ENCODE measurements at regions of chr19 and their contacts with region 1.

Region 1: DNA sequence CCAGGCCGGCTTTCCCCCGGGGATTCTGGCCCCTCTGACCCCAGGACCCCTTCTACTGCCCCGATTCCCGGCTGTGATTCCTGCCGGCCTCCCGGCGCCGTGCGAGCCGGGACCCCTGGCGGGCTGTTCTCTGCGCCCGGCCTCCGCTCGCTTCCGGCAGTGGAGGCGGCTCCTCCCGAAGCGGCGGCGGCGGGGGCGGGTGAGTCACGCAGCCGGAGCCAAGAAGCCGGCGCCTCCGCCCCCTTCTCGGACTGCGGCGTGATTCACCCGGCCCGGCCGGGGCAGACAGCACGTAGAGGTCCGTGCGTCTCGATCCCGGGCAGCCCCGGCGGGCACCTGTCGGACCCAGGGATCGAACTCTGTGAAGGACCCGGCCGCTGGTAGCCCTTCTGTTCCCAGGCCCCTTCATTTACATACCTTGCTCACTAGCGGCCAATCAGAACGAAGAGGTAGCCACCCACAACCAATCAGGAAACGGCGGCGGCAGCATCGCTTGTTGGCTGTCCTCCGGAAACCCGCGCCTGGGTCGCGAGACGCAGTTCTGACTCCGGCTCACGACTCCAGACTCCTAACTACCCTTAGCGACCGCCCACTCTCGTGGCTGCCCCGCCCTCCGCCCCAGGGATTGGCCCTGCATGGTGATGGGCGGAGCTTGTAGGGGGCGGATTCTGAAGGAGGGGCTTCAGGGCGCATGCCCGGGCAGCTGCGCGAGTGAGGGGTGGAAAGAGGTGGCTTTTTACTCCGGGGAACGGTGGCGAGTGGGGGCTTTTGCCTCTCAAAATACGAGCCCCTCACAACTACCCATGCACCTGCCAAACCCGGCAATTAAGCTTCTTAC is at the start of gene SERTAD1:
- DNase-seq: peak; percentile 100
- ATAC-seq: peak; percentile 78 to 85
- H3K4me3 ChIP-seq: peak within 1 kb of the TSS; percentile 66
- H3K27ac ChIP-seq: peak within 1 kb of the TSS; percentile 93 to 94
- H3K4me1 ChIP-seq: peaks cover 25% of the 10 kb centered on the region
- CTCF ChIP-seq: peak; percentile 100
- EP300 ChIP-seq: no peak; a peak in 1 of 5 replicates
- POLR2A ChIP-seq: peak; percentile 99
- RAD21 ChIP-seq: peak; percentile 11 to 73; a peak in 4 of 5 replicates
- polyA plus RNA-seq, gene SERTAD1: 10.0 and 10.7 TPM in 2 replicates

Region 2: GRCh38 chr19:40025938-40026596 is 399.6 kb before region 1 on chr19:
- CTCF ChIA-PET with region 1: no interaction called
- POLR2A ChIA-PET with region 1: no interaction called
- DNase-seq: no peak
- ATAC-seq: no peak
- H3K4me3 ChIP-seq: no peak overlapping the region
- H3K27ac ChIP-seq: no peak overlapping the region
- H3K4me1 ChIP-seq: no peaks in the 10 kb centered on the region
- CTCF ChIP-seq: no peak
- EP300 ChIP-seq: no peak
- POLR2A ChIP-seq: no peak
- RAD21 ChIP-seq: no peak

Region 3: DNA sequence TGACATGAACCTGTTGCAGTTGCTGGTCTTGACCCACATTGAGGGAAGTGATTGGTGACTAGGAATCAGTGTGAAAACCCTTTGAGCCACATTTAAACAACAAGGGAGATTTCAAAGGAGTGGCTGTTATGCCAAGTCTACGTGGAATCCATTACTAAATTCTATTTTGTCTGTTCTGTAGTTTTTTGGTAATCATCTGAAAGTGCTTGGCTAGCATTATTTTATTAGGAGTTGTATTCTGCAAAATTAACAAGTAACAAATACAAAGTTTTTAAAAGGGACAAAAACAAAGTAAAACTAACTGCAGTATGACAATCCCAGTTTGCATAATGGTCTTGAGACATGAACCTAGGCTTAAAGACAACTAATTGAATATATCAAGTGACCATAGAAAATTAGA is 320.9 kb before region 1 on chr19:
- CTCF ChIA-PET with region 1: no interaction called
- POLR2A ChIA-PET with region 1: no interaction called
- DNase-seq: no peak
- ATAC-seq: no peak
- H3K4me3 ChIP-seq: no peak overlapping the region
- H3K27ac ChIP-seq: no peak overlapping the region
- H3K4me1 ChIP-seq: no peaks in the 10 kb centered on the region
- CTCF ChIP-seq: no peak
- EP300 ChIP-seq: no peak
- POLR2A ChIP-seq: no peak
- RAD21 ChIP-seq: no peak

Region 4: DNA sequence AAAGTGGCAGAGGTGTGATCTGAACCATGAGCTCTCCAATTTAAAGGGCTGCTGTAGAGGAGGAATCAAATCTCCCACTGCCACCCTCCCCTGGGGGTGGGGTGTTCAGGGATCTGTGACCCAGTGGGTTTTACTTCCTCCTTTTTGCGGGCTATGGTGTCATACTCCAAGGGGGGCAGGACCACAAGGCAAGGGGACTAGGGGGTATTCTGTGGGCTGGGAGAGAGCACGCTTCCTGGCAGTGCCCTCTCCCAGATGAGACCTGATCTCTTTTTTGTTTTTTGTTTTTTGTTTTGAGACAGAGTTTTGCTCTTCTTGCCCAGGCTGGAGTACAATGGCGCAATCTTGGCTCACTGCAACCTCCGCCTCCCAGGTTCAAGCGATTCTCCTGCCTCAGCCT is 66.9 kb before region 1 on chr19:
- CTCF ChIA-PET with region 1: interaction called, 11 read pairs
- POLR2A ChIA-PET with region 1: no interaction called
- DNase-seq: no peak
- ATAC-seq: no peak
- H3K4me3 ChIP-seq: no peak overlapping the region
- H3K27ac ChIP-seq: no peak overlapping the region
- H3K4me1 ChIP-seq: no peaks in the 10 kb centered on the region
- CTCF ChIP-seq: no peak
- EP300 ChIP-seq: no peak
- POLR2A ChIP-seq: no peak
- RAD21 ChIP-seq: no peak

Region 5: DNA sequence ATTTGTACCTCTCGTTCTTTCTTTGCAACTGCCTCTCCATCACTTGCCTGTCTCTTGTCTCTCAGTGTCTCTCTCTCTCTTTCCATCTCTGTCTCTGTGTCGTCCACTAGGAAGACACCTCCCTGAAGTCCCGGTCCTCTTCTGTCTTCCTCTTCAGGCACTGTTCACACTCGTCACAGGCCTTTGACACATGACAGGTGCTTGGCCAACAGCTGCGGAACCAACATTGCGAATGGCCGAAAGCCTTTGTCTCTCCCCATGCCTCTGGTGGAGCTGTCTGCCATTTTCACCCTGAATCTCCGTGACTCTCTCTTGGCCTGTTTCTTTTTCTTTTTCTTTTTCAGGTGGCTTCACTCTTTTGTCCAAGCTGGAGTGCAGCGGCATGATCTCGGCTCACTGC is 38.5 kb before region 1 on chr19:
- CTCF ChIA-PET with region 1: interaction called, 11 read pairs
- POLR2A ChIA-PET with region 1: interaction called, 8 read pairs
- DNase-seq: no peak
- ATAC-seq: no peak
- H3K4me3 ChIP-seq: no peak overlapping the region
- H3K27ac ChIP-seq: no peak overlapping the region
- H3K4me1 ChIP-seq: no peaks in the 10 kb centered on the region
- CTCF ChIP-seq: no peak
- EP300 ChIP-seq: no peak
- POLR2A ChIP-seq: no peak
- RAD21 ChIP-seq: no peak

Region 6: DNA sequence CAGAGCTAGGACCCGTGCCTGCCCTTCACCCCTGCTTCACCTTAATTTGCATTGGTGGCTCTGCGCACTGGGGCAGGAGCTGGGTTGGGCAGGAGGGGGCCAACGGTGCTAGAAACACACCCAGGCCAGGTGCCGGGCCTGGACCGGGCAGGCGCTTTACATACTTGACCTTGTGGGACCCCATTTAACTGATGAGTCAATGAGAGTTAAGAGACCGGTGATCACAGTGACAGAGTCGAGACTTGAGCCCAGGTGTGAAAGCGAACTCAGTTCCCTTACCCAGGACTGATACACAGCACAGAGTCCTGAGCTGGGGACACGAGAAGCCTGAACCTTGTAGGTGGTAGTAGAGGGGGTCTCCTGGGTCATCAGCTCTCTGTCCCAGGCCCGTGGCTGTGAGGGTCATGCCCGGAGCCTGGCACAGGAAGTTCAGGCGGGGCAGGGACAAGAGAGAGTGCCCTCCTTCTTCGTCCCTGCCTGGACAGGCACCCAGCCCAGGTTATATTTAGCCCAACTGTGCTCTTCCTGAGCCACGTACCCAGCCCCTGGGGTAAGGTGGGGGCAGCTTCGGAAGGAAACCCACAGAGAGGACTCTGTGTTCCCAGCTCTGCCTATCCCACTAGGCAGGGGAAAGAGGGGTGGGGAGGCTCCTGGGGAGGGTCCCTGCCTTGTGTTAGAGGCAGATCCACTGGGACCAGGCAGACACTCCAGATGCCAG is 14.4 kb before region 1 on chr19:
- CTCF ChIA-PET with region 1: interaction called, 950 read pairs
- POLR2A ChIA-PET with region 1: interaction called, 47 read pairs
- DNase-seq: no peak
- ATAC-seq: peak; percentile 19 to 31; a peak in 5 of 6 replicates
- H3K4me3 ChIP-seq: no peak overlapping the region
- H3K27ac ChIP-seq: peak overlapping the region in 1 of 2 experiments; percentile 52; a peak in 3 of 6 replicates
- H3K4me1 ChIP-seq: peaks cover 12% of the 10 kb centered on the region; the same call in 1 of the 3 replicates
- CTCF ChIP-seq: no peak
- EP300 ChIP-seq: no peak
- POLR2A ChIP-seq: no peak
- RAD21 ChIP-seq: no peak

Region 7: GRCh38 chr19:40549007-40549708 is 123.5 kb after region 1 on chr19:
- CTCF ChIA-PET with region 1: interaction called, 13 read pairs
- POLR2A ChIA-PET with region 1: no interaction called
- DNase-seq: peak; percentile 92
- ATAC-seq: peak; percentile 97 to 99
- H3K4me3 ChIP-seq: peak overlapping the region; percentile 33
- H3K27ac ChIP-seq: peak overlapping the region; percentile 49 to 68; a peak in 4 of 6 replicates
- H3K4me1 ChIP-seq: peaks cover 5% of the 10 kb centered on the region
- CTCF ChIP-seq: peak; percentile 85
- EP300 ChIP-seq: no peak; a peak in 1 of 5 replicates
- POLR2A ChIP-seq: no peak
- RAD21 ChIP-seq: peak; percentile 63 to 90

Region 8: GRCh38 chr19:40603389-40604135 is 177.9 kb after region 1 on chr19:
- CTCF ChIA-PET with region 1: interaction called, 13 read pairs
- POLR2A ChIA-PET with region 1: interaction called, 12 read pairs
- DNase-seq: peak; percentile 99 to 100
- ATAC-seq: peak; percentile 41 to 80
- H3K4me3 ChIP-seq: peak overlapping the region; percentile 36
- H3K27ac ChIP-seq: peak overlapping the region; percentile 55 to 85
- H3K4me1 ChIP-seq: peaks cover 58% of the 10 kb centered on the region
- CTCF ChIP-seq: peak; percentile 20; the same call in 1 of the 3 replicates
- EP300 ChIP-seq: no peak
- POLR2A ChIP-seq: peak; percentile 20; the same call in 1 of the 2 replicates
- RAD21 ChIP-seq: no peak; a peak in 1 of 5 replicates

Measured in A549 (cell line).